ENCODE measurements at regions of chr11 and their contacts with region 1.

Region 1: GRCh38 chr11:32583459-32584271 is at the start of gene EIF3M:
- DNase-seq: peak; percentile 95
- H3K4me3 Mint-ChIP-seq: peak within 1 kb of the TSS; percentile 92
- H3K27ac Mint-ChIP-seq: peak within 1 kb of the TSS; percentile 96
- H3K4me1 Mint-ChIP-seq: peaks cover 31% of the 10 kb centered on the region
- H3K27me3 Mint-ChIP-seq: no peaks in the 10 kb centered on the region
- total RNA-seq, gene EIF3M: 315 and 317 TPM in 2 replicates

Region 2: DNA sequence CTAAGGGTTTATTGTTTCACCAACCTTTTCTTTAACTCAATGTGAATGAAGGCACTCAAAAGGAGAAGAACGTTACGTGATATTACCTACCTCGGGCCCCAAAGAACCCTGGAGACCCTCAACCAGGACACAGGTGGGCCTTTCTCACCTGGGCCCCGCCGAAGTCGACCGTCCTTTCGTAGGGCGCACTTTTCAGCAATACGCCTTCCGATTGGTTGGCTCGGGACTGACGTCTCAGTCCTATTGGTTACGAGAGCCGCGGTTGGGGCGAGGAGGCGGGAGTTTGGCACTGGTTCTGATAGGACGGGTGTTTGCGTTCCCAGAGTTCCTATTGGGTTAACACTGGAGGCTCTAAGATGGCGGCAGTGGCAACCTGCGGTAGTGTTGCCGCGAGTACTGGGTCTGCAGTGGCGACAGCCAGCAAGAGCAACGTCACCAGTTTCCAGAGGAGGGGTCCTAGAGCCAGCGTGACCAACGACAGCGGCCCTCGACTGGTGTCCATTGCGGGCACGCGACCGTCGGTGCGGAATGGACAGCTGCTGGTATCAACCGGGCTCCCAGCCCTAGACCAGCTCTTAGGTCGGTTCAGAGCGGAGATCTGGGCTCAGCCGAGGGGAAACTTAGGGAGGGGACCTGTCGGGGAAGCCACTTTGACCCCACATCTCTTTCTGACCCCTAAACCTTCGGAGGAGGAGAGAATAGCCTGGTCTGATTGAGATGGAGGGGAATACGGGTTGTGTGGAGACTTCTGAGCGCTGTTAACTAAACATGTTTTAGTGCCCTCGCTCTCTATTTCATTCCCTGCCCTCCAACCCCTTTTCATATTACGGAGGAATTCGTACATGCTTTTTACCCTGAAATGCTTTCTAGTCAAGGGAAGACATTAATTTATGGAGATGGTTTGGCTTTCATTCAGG is 1074.0 kb before region 1 on chr11 and contains the starts of genes ELP4 and IMMP1L:
- intact Hi-C with region 1: loop called (anchors 10 kb)
- DNase-seq: peak; percentile 93
- H3K4me3 Mint-ChIP-seq: peak within 1 kb of the TSS; percentile 91
- H3K27ac Mint-ChIP-seq: peak within 1 kb of the TSS; percentile 84
- H3K4me1 Mint-ChIP-seq: peaks cover 24% of the 10 kb centered on the region
- H3K27me3 Mint-ChIP-seq: no peaks in the 10 kb centered on the region
- total RNA-seq, gene ELP4: 18.6 and 19.1 TPM in 2 replicates
- total RNA-seq, gene IMMP1L: 20.8 and 25.5 TPM in 2 replicates

Region 3: GRCh38 chr11:31641477-31642062 is 942.1 kb before region 1 on chr11:
- intact Hi-C with region 1: loop called (anchors 10 kb)
- DNase-seq: no peak
- H3K4me3 Mint-ChIP-seq: no peak overlapping the region
- H3K27ac Mint-ChIP-seq: no peak overlapping the region
- H3K4me1 Mint-ChIP-seq: no peaks in the 10 kb centered on the region
- H3K27me3 Mint-ChIP-seq: no peaks in the 10 kb centered on the region

Region 4: GRCh38 chr11:32326522-32326921 is 257.1 kb before region 1 on chr11:
- intact Hi-C with region 1: loop called (anchors 10 kb)
- DNase-seq: no peak
- H3K4me3 Mint-ChIP-seq: no peak overlapping the region
- H3K27ac Mint-ChIP-seq: no peak overlapping the region
- H3K4me1 Mint-ChIP-seq: no peaks in the 10 kb centered on the region
- H3K27me3 Mint-ChIP-seq: peaks cover 20% of the 10 kb centered on the region

Region 5: DNA sequence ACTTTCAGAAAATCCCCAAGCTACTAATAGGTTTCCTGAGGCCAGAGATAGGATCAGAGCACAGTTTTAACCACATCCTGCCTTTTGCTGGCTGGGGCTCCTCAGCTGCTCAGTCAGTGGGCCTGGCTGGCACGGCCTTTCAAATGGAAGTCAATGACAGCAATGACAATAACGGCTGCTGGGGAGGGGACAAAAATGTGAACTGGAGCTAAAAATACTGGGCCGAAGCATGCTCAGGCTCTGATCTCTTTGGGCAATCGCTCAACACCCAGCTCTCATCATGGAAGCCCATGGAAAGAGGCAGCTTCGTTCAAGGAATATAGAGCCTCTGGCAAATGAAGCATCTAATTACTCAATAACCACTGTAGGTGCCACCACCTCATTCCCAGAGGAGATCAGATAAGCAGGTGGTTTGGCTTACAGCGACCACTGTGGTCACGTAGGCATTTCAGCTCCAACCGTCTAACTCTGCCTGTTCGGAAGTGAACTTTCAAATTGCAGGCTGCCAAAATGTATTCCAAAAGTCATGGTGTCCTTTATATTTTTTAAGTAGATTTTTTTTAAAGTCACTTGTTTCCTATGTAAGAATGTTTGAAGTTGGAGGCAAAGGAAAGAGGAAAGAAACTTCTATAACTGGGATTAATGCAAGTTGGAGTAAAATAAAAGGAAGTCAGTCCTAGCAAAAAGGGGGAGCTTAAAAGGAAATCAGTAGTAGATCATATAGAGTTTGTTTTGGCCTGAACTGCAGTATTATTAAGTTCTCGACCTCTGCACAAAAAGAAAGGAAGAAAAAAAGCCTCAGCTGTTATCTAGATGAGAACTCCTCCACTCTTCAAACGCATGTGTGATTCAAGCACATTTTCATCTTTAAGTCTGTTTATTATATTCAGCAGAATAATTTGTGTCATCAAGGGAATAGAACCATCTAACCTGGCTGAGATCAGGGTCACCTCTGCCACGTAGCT is 162.4 kb before region 1 on chr11:
- intact Hi-C with region 1: loop called (anchors 5 kb)
- DNase-seq: peak; percentile 63
- H3K4me3 Mint-ChIP-seq: peak overlapping the region; percentile 54
- H3K27ac Mint-ChIP-seq: peak overlapping the region; percentile 54
- H3K4me1 Mint-ChIP-seq: peaks cover 37% of the 10 kb centered on the region
- H3K27me3 Mint-ChIP-seq: peaks cover 59% of the 10 kb centered on the region

Region 6: GRCh38 chr11:32561835-32562234 is 21.8 kb before region 1 on chr11:
- intact Hi-C with region 1: no loop called
- DNase-seq: no peak
- H3K4me3 Mint-ChIP-seq: no peak overlapping the region
- H3K27ac Mint-ChIP-seq: no peak overlapping the region
- H3K4me1 Mint-ChIP-seq: peaks cover 3% of the 10 kb centered on the region
- H3K27me3 Mint-ChIP-seq: no peaks in the 10 kb centered on the region

Region 7: GRCh38 chr11:32602657-32603415 is 19.2 kb after region 1 on chr11:
- intact Hi-C with region 1: loop called (anchors 2 kb)
- DNase-seq: no peak
- H3K4me3 Mint-ChIP-seq: no peak overlapping the region
- H3K27ac Mint-ChIP-seq: no peak overlapping the region
- H3K4me1 Mint-ChIP-seq: peaks cover 7% of the 10 kb centered on the region
- H3K27me3 Mint-ChIP-seq: no peaks in the 10 kb centered on the region

Region 8: GRCh38 chr11:32643526-32643925 is 59.9 kb after region 1 on chr11:
- intact Hi-C with region 1: no loop called
- DNase-seq: no peak
- H3K4me3 Mint-ChIP-seq: no peak overlapping the region
- H3K27ac Mint-ChIP-seq: no peak overlapping the region
- H3K4me1 Mint-ChIP-seq: no peaks in the 10 kb centered on the region
- H3K27me3 Mint-ChIP-seq: peaks cover 2% of the 10 kb centered on the region

Region 9: DNA sequence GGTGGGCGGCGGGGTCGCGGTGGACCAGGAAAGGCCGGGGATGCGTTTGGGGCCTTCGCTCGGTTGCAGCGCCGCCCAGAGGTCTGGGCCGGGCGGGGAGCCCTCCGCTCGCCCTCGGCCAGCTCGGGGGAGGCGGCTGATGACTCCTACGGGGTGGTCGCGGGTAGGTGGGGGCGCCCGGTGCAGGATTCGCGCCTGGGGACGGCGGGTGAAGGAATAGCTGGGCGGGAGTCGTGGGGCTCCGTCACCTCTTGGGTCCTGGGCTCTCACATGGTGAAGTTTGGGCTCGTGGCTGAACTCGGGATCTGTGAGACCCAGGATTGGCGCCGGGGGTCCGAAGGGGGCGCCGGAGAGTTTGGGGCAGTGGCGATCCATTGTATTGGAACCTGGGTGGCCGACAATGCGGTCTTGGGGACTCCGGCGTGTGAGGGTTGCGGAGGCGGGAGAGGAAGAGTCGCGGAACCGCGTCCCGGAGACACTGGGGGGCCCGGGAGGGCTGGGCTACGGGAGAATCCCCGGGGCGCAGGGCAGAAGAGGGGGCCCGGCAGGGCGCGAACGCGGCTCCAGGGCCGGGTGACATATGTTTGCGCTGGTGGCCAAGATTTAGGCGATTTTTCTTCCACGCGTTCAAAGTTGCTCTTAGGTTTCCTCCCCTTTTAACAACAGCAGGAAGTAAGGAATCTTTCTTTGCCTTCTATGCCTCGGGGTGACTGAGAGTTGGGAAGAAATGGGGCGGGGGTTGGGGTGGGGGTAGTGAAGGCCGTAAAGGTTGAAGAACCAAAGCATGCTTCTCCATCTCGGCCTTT is 309.9 kb after region 1 on chr11:
- intact Hi-C with region 1: loop called (anchors 5 kb)
- DNase-seq: peak; percentile 23
- H3K4me3 Mint-ChIP-seq: peak overlapping the region; percentile 98
- H3K27ac Mint-ChIP-seq: peak overlapping the region; percentile 95
- H3K4me1 Mint-ChIP-seq: peaks cover 27% of the 10 kb centered on the region
- H3K27me3 Mint-ChIP-seq: peaks cover 8% of the 10 kb centered on the region

Measured in activated T-helper 2 cell treated with anti-CD3 and anti-CD28 coated beads, Interferon-gamma antibody, Interleukin-2, Interleukin-4, amounts not matched to agents 10 μg/mL and 5 μg/mL and 100 μg/mL, durations not matched to agents 14 hours and 24 hours and 36 hours (primary cell).